Naive thymus-derived CD4-positive, alpha-beta T cell (primary cell): ENCODE measurements at regions of chrX and their contacts with region 1.

Region 1: GRCh38 chrX:71068049-71068763 is at the start of gene SNX12:
- DNase-seq: peak; percentile 66 to 93 (median 88)
- ATAC-seq: peak; percentile 99
- H3K4me3 ChIP-seq: peak within 1 kb of the TSS; percentile 81
- H3K4me3 Mint-ChIP-seq: peak within 1 kb of the TSS; percentile 76 to 98 (median 94)
- H3K27ac ChIP-seq: peak within 1 kb of the TSS; percentile 86
- H3K27ac Mint-ChIP-seq: peak within 1 kb of the TSS; percentile 90 to 98 (median 97)
- H3K4me1 ChIP-seq: peaks cover 0 to 4% of the 10 kb centered on the region in 2 donors
- H3K4me1 Mint-ChIP-seq: peaks cover 9 to 24% (median 18%) of the 10 kb centered on the region in 7 donors
- H3K27me3 ChIP-seq: no peaks in the 10 kb centered on the region
- H3K27me3 Mint-ChIP-seq: peaks cover 0 to 12% (median 0%) of the 10 kb centered on the region in 5 donors
- total RNA-seq, gene SNX12: 19.0 to 41.6 (median 37.3) TPM

Region 2: DNA sequence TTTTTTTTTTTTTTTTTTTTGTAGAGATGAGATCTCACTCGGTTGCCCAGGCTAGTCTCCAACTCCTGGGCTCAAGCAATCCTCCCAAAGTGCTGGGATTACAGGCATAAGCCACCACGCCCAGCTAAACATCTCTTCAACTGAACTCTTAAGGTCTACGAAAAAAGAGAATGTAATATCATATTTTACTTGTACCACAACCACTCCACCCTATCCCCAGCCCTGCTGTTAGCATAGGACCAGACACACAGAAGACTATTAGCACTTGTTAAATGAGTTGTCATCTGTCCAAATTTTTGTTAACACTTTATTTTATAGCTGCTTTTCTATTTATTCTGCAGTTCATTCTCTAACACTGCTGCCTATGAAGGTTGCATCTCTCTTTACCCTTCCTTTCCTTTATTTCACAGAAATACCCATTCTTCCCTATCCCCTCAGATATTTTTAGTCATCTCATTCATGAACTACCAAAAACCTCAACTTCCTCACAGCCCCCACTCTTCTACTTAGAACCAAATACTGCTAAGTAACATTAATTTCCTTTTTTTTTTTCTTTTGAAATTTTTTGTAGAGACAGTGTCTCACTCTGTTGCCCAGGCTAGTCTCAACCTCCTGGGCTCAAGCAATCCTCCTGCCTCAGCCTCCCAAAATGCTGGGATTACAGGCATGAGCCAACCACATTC is 10.2 kb before region 1 on chrX:
- CTCF ChIA-PET with region 1: no interaction called
- POLR2A ChIA-PET with region 1: interaction called, 12 read pairs
- intact Hi-C with region 1: no loop called
- DNase-seq: no peak
- ATAC-seq: no peak
- H3K4me3 ChIP-seq: no peak overlapping the region
- H3K4me3 Mint-ChIP-seq: peak overlapping the region in 2 of 10 donors; percentile 8 to 31
- H3K27ac ChIP-seq: no peak overlapping the region
- H3K27ac Mint-ChIP-seq: peak overlapping the region in 4 of 9 donors; percentile 24 to 72 (median 28)
- H3K4me1 ChIP-seq: no peaks in the 10 kb centered on the region
- H3K4me1 Mint-ChIP-seq: peaks cover 11 to 40% (median 32%) of the 10 kb centered on the region in 7 donors
- H3K27me3 ChIP-seq: no peaks in the 10 kb centered on the region
- H3K27me3 Mint-ChIP-seq: no peaks in the 10 kb centered on the region

Region 3: GRCh38 chrX:71111141-71111843 is 43.1 kb after region 1 on chrX and contains the start of gene IL2RG:
- CTCF ChIA-PET with region 1: no interaction called
- POLR2A ChIA-PET with region 1: interaction called, 6 read pairs
- intact Hi-C with region 1: loop called (anchors 1 kb)
- DNase-seq: peak; percentile 37 to 92 (median 87)
- ATAC-seq: peak; percentile 95
- H3K4me3 ChIP-seq: peak within 1 kb of the TSS; percentile 80
- H3K4me3 Mint-ChIP-seq: peak within 1 kb of the TSS; percentile 93 to 98 (median 98)
- H3K27ac ChIP-seq: peak within 1 kb of the TSS; percentile 96
- H3K27ac Mint-ChIP-seq: peak within 1 kb of the TSS; percentile 96 to 100 (median 98)
- H3K4me1 ChIP-seq: peaks cover 28 to 39% of the 10 kb centered on the region in 2 donors
- H3K4me1 Mint-ChIP-seq: peaks cover 24 to 69% (median 43%) of the 10 kb centered on the region in 7 donors
- H3K27me3 ChIP-seq: no peaks in the 10 kb centered on the region
- H3K27me3 Mint-ChIP-seq: no peaks in the 10 kb centered on the region
- total RNA-seq, gene IL2RG: 228 to 671 (median 329) TPM

Region 4: DNA sequence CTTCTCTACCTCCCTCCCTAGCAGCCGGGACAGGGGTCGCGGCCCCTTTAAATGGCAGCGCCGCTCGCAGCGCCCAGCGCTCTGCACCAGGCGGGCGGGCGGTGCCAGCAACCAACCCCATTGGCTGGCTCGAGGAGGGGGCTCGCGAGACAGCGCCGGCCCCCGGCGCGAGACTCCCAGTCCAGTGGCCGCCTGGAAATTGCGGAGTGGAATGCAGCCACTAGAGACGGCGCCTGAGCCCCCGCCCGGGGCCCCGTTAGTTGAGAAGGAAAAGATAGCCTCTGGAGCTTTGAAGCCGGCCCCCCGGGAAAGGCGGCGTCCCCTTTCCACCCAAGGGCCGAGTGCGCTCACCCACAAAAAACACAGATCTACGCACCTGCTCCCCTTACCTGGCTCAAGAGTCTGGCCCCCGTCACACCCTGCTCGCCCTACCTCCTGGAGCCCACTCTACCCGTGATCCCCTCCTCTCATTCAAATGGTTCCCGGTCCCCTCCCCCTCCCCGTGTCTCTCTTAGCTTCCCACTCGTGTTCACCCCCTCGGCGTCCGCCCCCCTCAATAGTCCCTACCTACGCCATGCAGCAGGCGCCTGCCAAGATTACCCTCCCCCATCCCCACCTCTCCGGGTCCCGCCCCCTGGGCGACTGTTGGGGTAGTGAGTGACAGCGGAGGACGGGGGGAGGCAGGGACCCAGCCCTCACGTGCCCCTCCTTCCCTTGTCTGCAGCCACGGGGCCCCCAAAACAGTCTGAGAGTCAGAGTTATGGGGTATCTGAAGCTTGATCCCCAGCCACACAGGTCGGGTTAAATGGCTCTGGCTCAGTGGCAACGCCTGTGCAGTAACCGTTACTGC is 186.1 kb after region 1 on chrX and contains the start of gene ZMYM3:
- CTCF ChIA-PET with region 1: no interaction called
- POLR2A ChIA-PET with region 1: no interaction called
- intact Hi-C with region 1: loop called in 1 of 2 experiments (anchors 1 kb)
- DNase-seq: peak; percentile 46 to 87 (median 78)
- ATAC-seq: peak; percentile 89
- H3K4me3 ChIP-seq: peak within 1 kb of the TSS; percentile 79
- H3K4me3 Mint-ChIP-seq: peak within 1 kb of the TSS; percentile 76 to 97 (median 90)
- H3K27ac ChIP-seq: peak within 1 kb of the TSS; percentile 91
- H3K27ac Mint-ChIP-seq: peak within 1 kb of the TSS; percentile 87 to 96 (median 91)
- H3K4me1 ChIP-seq: peaks cover 0 to 20% of the 10 kb centered on the region in 2 donors
- H3K4me1 Mint-ChIP-seq: peaks cover 0 to 30% (median 18%) of the 10 kb centered on the region in 7 donors
- H3K27me3 ChIP-seq: no peaks in the 10 kb centered on the region
- H3K27me3 Mint-ChIP-seq: no peaks in the 10 kb centered on the region
- total RNA-seq, gene ZMYM3: 21.2 to 34.1 (median 21.6) TPM

Region 5: GRCh38 chrX:71365876-71366673 is 297.9 kb after region 1 on chrX and contains the start of gene TAF1:
- CTCF ChIA-PET with region 1: no interaction called
- POLR2A ChIA-PET with region 1: interaction called, 8 read pairs
- intact Hi-C with region 1: loop called (anchors 1 kb)
- DNase-seq: peak; percentile 61 to 94 (median 90)
- ATAC-seq: peak; percentile 93
- H3K4me3 ChIP-seq: peak within 1 kb of the TSS; percentile 81
- H3K4me3 Mint-ChIP-seq: peak within 1 kb of the TSS; percentile 86 to 99 (median 96)
- H3K27ac ChIP-seq: peak within 1 kb of the TSS; percentile 94
- H3K27ac Mint-ChIP-seq: peak within 1 kb of the TSS; percentile 97 to 100 (median 98)
- H3K4me1 ChIP-seq: peaks cover 5 to 9% of the 10 kb centered on the region in 2 donors
- H3K4me1 Mint-ChIP-seq: peaks cover 12 to 34% (median 27%) of the 10 kb centered on the region in 7 donors
- H3K27me3 ChIP-seq: no peaks in the 10 kb centered on the region
- H3K27me3 Mint-ChIP-seq: no peaks in the 10 kb centered on the region
- total RNA-seq, gene TAF1: 55.4 to 86.7 (median 76.1) TPM